Breast epithelium (tissue), 4 donors: ENCODE measurements at regions of chr14 and their contacts with region 1.

Region 1: DNA sequence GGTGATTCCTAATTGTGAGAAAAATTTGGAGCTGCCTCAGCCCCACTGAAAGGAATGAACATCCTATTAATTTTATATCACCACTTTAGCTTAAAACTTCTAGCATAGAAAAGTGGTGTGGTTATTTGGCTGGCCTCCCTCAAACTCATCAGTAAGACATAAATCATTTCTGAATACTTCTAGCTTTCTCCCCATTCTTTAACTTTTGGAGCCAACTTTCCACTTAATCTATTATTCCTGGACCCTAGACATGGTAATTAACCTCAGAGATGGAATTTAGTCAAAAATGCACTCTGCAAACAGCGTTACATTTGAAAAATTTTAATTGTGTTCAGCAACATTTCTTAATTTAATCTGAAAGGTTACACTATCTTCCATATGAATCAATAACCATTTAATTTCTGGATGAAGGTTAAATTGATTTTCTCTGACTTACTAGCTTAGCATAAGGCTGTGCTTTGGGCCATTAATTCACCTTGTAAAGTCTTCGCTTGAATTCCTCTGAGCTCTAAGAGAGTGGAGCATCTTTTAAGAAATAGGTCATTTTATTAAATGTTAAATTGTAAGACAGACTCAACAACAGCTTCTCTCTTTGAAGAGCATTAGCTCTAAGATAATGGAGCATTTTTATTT is 753.6 kb upstream of the STXBP6 start:
- DNase-seq: no peak
- H3K4me3 ChIP-seq: no peak overlapping the region
- H3K27ac ChIP-seq: no peak overlapping the region
- H3K4me1 ChIP-seq: no peaks in the 10 kb centered on the region
- H3K27me3 ChIP-seq: no peaks in the 10 kb centered on the region
- CTCF ChIP-seq: no peak
- POLR2A ChIP-seq: no peak

Region 2: DNA sequence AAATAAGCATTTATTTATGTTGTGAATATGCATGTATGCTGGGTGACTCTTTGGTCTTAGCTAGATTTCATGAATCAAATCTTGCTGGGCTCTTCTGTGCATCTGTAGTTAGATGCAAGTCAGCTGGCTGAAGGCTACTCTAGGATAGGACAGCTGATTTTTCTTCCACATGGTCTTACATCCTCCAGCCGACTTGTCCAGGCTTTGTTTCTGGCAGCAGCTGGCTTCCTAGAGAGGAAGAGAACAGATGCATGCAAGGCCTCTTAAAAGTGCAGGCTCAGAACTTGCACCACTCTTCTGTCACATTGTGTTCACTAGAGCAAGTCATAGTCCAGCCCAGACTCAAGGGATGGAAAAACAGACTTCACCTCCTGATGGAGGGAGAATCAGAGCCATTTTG is 318.1 kb before region 1 on chr14:
- intact Hi-C with region 1: loop called (anchors 10 kb)
- DNase-seq: no peak
- H3K4me3 ChIP-seq: no peak overlapping the region
- H3K27ac ChIP-seq: no peak overlapping the region
- H3K4me1 ChIP-seq: no peaks in the 10 kb centered on the region
- H3K27me3 ChIP-seq: no peaks in the 10 kb centered on the region
- CTCF ChIP-seq: no peak
- POLR2A ChIP-seq: no peak